ENCODE measurements at regions of chr2 and their contacts with region 1.

Region 1: DNA sequence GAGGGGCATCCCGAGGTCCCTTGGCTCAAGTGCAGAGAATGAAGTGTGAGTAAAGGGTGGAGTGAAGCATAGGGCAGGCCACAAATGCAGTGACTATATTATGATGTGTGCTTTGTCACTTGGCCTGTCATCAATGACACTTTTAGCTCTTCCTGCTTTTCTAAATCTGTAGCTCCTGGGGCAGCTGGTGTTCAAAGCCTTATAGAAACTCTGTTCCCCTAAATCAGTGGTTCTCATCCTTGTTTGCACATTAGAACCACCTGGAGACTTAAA is 135.6 kb upstream of the LGALSL start:
- DNase-seq: no peak
- ATAC-seq: no peak
- H3K4me3 ChIP-seq: no peak overlapping the region
- H3K27ac ChIP-seq: no peak overlapping the region
- H3K4me1 ChIP-seq: peaks cover 0 to 5% (median 2%) of the 10 kb centered on the region in 9 donors
- H3K27me3 ChIP-seq: peaks cover 0 to 4% (median 0%) of the 10 kb centered on the region in 7 donors
- CTCF ChIP-seq: no peak

Region 2: DNA sequence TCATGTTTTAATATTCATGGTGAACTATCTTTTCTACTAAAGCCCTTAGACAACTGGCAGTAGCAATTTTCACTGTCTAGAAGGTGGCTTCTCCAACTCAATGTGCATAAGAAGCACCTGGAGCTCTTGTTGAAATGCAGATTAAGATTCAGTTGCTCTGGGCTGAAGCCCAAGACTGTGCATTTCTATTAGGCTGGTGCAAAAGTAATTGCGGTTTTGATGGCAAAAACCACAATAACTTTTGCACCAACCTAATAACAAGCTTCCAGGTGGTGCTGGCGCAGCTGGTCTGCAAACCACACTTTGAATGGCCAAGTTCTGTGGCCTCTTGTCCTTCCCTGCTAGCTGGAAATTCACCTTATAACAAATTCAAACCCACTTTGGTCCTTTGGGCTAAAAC is 272.5 kb before region 1 on chr2:
- intact Hi-C with region 1: loop called in 7 of 10 experiments (anchors 2 to 5 kb)
- DNase-seq: no peak
- ATAC-seq: no peak
- H3K4me3 ChIP-seq: no peak overlapping the region
- H3K27ac ChIP-seq: no peak overlapping the region
- H3K4me1 ChIP-seq: peaks cover 0 to 8% (median 7%) of the 10 kb centered on the region in 9 donors
- H3K27me3 ChIP-seq: no peaks in the 10 kb centered on the region
- CTCF ChIP-seq: no peak

Measured in heart right ventricle (tissue), 16 donors.